Common myeloid progenitor, CD34-positive (primary cell): ENCODE measurements at regions of chr5 and their contacts with region 1.

Region 1: DNA sequence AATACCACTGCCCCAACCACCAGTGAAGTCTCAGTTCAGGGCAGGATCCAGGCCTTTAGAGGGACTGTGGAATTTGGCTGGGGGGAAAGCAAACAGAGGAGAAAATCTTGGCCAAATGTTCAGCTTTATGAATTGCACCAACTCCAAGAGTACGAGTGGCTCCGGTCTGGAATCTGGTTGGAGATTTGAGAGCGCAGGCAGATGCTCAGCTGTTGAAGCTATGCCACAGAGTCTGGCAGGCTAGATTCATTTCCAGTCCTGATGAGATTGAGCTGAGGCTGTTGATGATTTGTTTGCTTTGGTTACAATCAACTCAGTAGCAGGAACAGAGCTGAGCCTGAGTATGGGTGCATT is 9.1 kb upstream of the HSPB3 start:
- DNase-seq: no peak
- H3K4me3 ChIP-seq: no peak overlapping the region
- H3K27ac ChIP-seq: no peak overlapping the region
- H3K4me1 ChIP-seq: no peaks in the 10 kb centered on the region
- H3K27me3 ChIP-seq: no peaks in the 10 kb centered on the region

Region 2: DNA sequence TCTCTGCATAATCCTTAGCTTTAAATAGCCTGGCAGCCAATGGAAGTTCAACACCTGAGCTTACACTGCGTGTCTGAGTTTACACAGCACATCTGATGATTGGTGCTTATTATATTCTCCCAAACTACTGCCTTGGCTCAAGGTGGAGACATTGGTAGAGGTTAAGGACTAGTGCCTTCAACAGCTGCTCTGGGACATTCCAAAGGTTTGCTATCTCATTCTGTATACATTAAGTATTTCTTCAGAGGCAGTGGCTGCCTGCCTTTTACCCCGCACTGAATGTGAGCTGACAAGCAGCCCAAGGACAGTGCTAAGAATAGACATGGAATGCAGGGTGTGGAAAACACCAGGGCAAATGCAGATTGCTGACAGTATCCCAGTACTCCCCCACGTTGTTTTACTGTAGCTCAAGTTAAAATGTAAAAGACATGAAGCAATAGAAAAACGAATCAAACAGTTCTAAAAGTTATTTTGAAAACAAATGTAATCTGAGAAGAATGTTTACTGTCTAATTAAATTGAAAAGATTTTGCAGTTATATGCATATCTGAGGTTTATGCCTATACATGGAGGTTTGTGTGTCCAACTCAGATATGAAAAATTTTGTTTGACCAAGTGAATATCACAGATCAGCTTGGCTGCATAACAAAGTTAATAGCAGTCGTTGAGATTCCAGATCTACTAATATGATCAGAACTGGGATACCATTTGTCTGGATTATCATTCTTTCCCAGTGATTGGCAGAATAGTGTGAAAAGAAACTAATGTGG is 10.9 kb after region 1 on chr5:
- CTCF ChIA-PET with region 1: interaction called, 13 read pairs
- POLR2A ChIA-PET with region 1: interaction called, 3 read pairs
- DNase-seq: no peak
- H3K4me3 ChIP-seq: no peak overlapping the region
- H3K27ac ChIP-seq: no peak overlapping the region
- H3K4me1 ChIP-seq: no peaks in the 10 kb centered on the region
- H3K27me3 ChIP-seq: no peaks in the 10 kb centered on the region